MCF 10A (cell line): ENCODE measurements at regions of chrX and their contacts with region 1.

Region 1: GRCh38 chrX:44244008-44244407 is 99.5 kb downstream of the EFHC2 start:
- DNase-seq: peak; percentile 43
- H3K4me3 Mint-ChIP-seq: no peak overlapping the region
- H3K27ac Mint-ChIP-seq: no peak overlapping the region
- H3K4me1 Mint-ChIP-seq: no peaks in the 10 kb centered on the region
- H3K27me3 Mint-ChIP-seq: peaks cover 70% of the 10 kb centered on the region
- CTCF ChIP-seq: peak; percentile 61

Region 2: GRCh38 chrX:43750248-43750676 is 493.7 kb before region 1 on chrX:
- CTCF ChIA-PET with region 1: no interaction called
- POLR2A ChIA-PET with region 1: interaction called, 3 read pairs
- intact Hi-C with region 1: loop called (anchors 5 kb)
- DNase-seq: peak; percentile 82
- H3K4me3 Mint-ChIP-seq: no peak overlapping the region
- H3K27ac Mint-ChIP-seq: no peak overlapping the region
- H3K4me1 Mint-ChIP-seq: peaks cover 8% of the 10 kb centered on the region
- H3K27me3 Mint-ChIP-seq: peaks cover 68% of the 10 kb centered on the region
- CTCF ChIP-seq: peak; percentile 66

Region 3: DNA sequence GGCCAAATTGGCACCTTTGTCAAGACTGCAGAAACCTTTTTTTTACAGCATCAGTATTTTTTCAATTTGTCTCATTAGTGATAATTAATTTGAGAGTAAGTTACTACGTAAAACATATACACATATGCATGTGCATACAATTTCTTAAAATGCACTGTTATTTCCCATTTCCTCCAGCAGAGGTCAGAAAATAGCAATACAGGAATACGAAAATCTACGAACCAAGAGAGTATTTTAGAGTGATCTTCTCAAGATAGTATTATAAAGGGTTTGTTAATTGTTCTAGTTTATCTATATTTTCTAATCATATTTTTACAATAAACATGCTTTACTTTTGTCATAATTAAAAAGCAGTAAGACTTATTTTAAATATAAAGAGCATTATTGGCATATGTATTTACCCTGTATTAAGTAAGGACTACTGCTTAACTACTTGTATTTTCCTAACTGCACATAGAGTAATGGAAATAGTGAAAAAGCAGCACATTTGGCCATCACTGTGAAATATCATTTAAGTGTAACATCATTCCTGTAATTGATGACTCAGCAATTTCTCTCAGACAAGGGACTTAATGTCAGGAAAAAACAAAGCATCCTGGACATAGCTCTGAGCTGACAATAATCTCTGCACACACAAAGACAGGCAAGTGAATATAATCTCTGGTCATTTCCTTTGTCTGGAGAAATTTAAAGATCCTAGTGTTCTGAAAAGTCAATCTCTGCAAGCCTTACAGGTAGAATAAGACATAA is 407.4 kb before region 1 on chrX:
- CTCF ChIA-PET with region 1: interaction called, 6 read pairs
- POLR2A ChIA-PET with region 1: interaction called, 3 read pairs
- intact Hi-C with region 1: loop called (anchors 2 kb)
- DNase-seq: peak; percentile 50
- H3K4me3 Mint-ChIP-seq: no peak overlapping the region
- H3K27ac Mint-ChIP-seq: no peak overlapping the region
- H3K4me1 Mint-ChIP-seq: no peaks in the 10 kb centered on the region
- H3K27me3 Mint-ChIP-seq: peaks cover 62% of the 10 kb centered on the region
- CTCF ChIP-seq: peak; percentile 55

Region 4: GRCh38 chrX:44025555-44025954 is 218.5 kb before region 1 on chrX:
- CTCF ChIA-PET with region 1: interaction called, 10 read pairs
- POLR2A ChIA-PET with region 1: no interaction called
- intact Hi-C with region 1: loop called (anchors 1 kb)
- DNase-seq: no peak
- H3K4me3 Mint-ChIP-seq: no peak overlapping the region
- H3K27ac Mint-ChIP-seq: no peak overlapping the region
- H3K4me1 Mint-ChIP-seq: peaks cover 5% of the 10 kb centered on the region
- H3K27me3 Mint-ChIP-seq: peaks cover 37% of the 10 kb centered on the region
- CTCF ChIP-seq: no peak

Region 5: GRCh38 chrX:44189116-44189515 is 54.9 kb before region 1 on chrX:
- CTCF ChIA-PET with region 1: no interaction called
- POLR2A ChIA-PET with region 1: no interaction called
- intact Hi-C with region 1: no loop called
- DNase-seq: no peak
- H3K4me3 Mint-ChIP-seq: no peak overlapping the region
- H3K27ac Mint-ChIP-seq: no peak overlapping the region
- H3K4me1 Mint-ChIP-seq: no peaks in the 10 kb centered on the region
- H3K27me3 Mint-ChIP-seq: peaks cover 66% of the 10 kb centered on the region
- CTCF ChIP-seq: no peak

Region 6: DNA sequence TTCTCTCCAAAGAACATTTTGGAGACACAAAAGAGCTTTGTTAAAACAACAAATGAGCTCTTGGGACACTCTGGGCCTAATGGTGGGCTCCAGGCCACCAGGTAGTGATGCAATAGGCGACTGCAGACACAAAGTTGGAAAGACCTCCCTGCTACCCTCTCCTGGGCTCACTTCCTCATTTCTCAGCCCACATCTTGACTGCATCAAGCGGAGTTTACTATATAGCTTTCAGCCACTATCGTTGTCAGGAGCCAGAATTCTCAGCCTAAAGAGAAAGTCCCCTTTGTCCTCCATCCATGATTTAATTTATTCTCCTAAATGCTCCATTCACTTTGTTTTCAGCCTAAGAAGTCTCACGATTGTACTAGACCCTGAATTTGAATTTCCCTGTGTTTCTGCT is 15.4 kb before region 1 on chrX:
- CTCF ChIA-PET with region 1: interaction called, 11 read pairs
- POLR2A ChIA-PET with region 1: no interaction called
- intact Hi-C with region 1: no loop called
- DNase-seq: no peak
- H3K4me3 Mint-ChIP-seq: no peak overlapping the region
- H3K27ac Mint-ChIP-seq: no peak overlapping the region
- H3K4me1 Mint-ChIP-seq: peaks cover under 1% of the 10 kb centered on the region
- H3K27me3 Mint-ChIP-seq: peaks cover 46% of the 10 kb centered on the region
- CTCF ChIP-seq: no peak

Region 7: GRCh38 chrX:44542567-44543325 is 298.7 kb after region 1 on chrX and contains the start of gene FUNDC1:
- CTCF ChIA-PET with region 1: no interaction called
- POLR2A ChIA-PET with region 1: no interaction called
- intact Hi-C with region 1: loop called (anchors 1 kb)
- DNase-seq: peak; percentile 93
- H3K4me3 Mint-ChIP-seq: peak within 1 kb of the TSS; percentile 92
- H3K27ac Mint-ChIP-seq: peak within 1 kb of the TSS; percentile 98
- H3K4me1 Mint-ChIP-seq: peaks cover 8% of the 10 kb centered on the region
- H3K27me3 Mint-ChIP-seq: peaks cover 68% of the 10 kb centered on the region
- CTCF ChIP-seq: no peak
- total RNA-seq, gene FUNDC1: 14.7 and 20.2 TPM in 2 replicates